ENCODE measurements at regions of chrX and their contacts with region 1.

Region 1: GRCh38 chrX:122787231-122787630 is 396.8 kb upstream of the GRIA3 start:
- DNase-seq: no peak
- H3K4me3 ChIP-seq: no peak overlapping the region
- H3K27ac ChIP-seq: no peak overlapping the region
- H3K4me1 ChIP-seq: no peaks in the 10 kb centered on the region
- CTCF ChIP-seq: no peak

Region 2: DNA sequence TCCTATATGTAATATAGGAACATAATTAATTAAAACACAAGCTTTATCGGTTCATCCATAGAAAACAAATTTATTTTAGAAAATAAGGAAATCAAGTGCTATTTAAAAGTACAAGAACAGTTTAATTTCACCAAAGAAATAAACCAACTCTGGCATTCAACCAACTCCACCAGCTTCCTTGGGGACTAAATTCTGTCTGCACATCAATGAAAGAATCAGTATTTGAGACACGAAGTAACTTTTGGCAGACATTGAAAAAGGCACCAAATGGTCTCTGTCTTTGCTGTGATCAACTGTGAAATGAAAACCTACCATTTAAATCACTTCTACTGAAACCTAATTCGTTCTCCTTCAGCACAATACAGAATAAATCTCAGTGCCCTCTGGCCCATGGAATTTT is 322.9 kb before region 1 on chrX:
- CTCF ChIA-PET with region 1: no interaction called
- POLR2A ChIA-PET with region 1: no interaction called
- intact Hi-C with region 1: loop called (anchors 10 kb)
- DNase-seq: no peak
- H3K4me3 ChIP-seq: no peak overlapping the region
- H3K27ac ChIP-seq: no peak overlapping the region
- H3K4me1 ChIP-seq: no peaks in the 10 kb centered on the region
- CTCF ChIP-seq: no peak

Region 3: GRCh38 chrX:123190096-123190495 is 402.9 kb after region 1 on chrX:
- CTCF ChIA-PET with region 1: no interaction called
- POLR2A ChIA-PET with region 1: no interaction called
- intact Hi-C with region 1: no loop called
- DNase-seq: no peak
- H3K4me3 ChIP-seq: no peak overlapping the region
- H3K27ac ChIP-seq: no peak overlapping the region
- H3K4me1 ChIP-seq: no peaks in the 10 kb centered on the region
- CTCF ChIP-seq: no peak

Measured in OCI-LY7 (cell line).